Activated CD8-positive, alpha-beta T cell treated with anti-CD3 and anti-CD28 coated beads for 36 hours (primary cell): ENCODE measurements at regions of chr7 and their contacts with region 1.

Region 1: GRCh38 chr7:27196287-27196767 is 3.6 kb downstream of the HOXA13 start:
- DNase-seq: peak; percentile 94
- ATAC-seq: peak; percentile 32
- H3K4me3 Mint-ChIP-seq: no peak overlapping the region
- H3K27ac Mint-ChIP-seq: no peak overlapping the region
- H3K4me1 Mint-ChIP-seq: peaks cover 31% of the 10 kb centered on the region
- H3K27me3 Mint-ChIP-seq: peaks cover 78% of the 10 kb centered on the region
- CTCF ChIP-seq: peak; percentile 84

Region 2: GRCh38 chr7:27160546-27161213 is 35.6 kb before region 1 on chr7:
- CTCF ChIA-PET with region 1: interaction called, 7 read pairs
- POLR2A ChIA-PET with region 1: no interaction called
- intact Hi-C with region 1: loop called (anchors 5 kb)
- DNase-seq: peak; percentile 89
- ATAC-seq: peak; percentile 78
- H3K4me3 Mint-ChIP-seq: peak overlapping the region; percentile 59
- H3K27ac Mint-ChIP-seq: no peak overlapping the region
- H3K4me1 Mint-ChIP-seq: peaks cover 27% of the 10 kb centered on the region
- H3K27me3 Mint-ChIP-seq: peaks cover 79% of the 10 kb centered on the region
- CTCF ChIP-seq: peak; percentile 98

Region 3: DNA sequence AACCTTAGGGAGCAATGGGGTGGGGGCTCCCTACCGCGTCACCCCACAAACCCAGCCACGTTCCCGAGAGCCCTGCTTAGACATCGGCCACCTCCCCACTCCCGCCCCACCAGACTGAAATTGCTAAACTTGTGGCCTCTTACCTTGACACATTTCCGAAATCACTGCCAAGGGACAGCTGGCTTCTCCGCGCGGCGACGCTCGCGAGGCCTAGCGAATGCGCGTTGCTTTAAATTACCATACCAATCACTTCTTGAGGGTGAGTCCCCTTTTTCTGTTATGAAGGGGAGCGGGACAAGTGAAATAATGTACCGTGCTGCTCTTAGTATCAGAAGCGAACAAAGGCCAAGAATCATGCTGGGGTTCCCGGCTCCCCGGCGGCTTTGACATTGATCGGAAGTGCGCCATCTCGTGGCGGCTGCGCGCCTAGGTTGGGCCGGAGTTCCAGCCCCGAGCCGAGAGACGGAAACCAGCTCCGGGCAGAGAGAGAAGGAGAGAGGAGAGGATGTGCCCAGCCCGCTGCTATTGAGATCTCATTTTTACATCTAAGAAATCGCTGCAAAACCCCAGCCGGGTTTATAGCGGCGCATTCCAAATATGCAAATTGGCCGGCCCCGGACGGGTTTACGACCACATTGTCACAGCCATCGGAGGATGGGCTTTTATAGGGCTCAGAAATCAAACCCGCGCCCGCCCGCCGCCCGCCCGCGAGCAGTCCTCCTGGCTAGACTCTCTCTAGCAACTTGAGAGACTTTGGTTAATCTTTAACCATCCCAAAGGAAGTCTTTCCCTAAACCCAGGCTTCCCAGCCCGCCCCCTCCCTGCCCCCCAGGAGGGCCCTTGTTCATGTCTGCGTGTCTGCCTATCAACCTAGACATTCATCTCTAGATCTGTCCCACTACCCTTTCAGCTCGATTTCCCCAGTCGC is 16.6 kb before region 1 on chr7:
- CTCF ChIA-PET with region 1: interaction called, 28 read pairs
- POLR2A ChIA-PET with region 1: interaction called, 5 read pairs
- intact Hi-C with region 1: no loop called
- DNase-seq: peak; percentile 73
- ATAC-seq: peak; percentile 78
- H3K4me3 Mint-ChIP-seq: no peak overlapping the region
- H3K27ac Mint-ChIP-seq: no peak overlapping the region
- H3K4me1 Mint-ChIP-seq: peaks cover 5% of the 10 kb centered on the region
- H3K27me3 Mint-ChIP-seq: peaks cover 68% of the 10 kb centered on the region
- CTCF ChIP-seq: peak; percentile 84

Region 4: GRCh38 chr7:27377988-27378387 is 181.7 kb after region 1 on chr7:
- CTCF ChIA-PET with region 1: no interaction called
- POLR2A ChIA-PET with region 1: no interaction called
- intact Hi-C with region 1: no loop called
- DNase-seq: no peak
- ATAC-seq: no peak
- H3K4me3 Mint-ChIP-seq: no peak overlapping the region
- H3K27ac Mint-ChIP-seq: no peak overlapping the region
- H3K4me1 Mint-ChIP-seq: no peaks in the 10 kb centered on the region
- H3K27me3 Mint-ChIP-seq: peaks cover 15% of the 10 kb centered on the region
- CTCF ChIP-seq: no peak

Region 5: GRCh38 chr7:27576360-27576944 is 380.1 kb after region 1 on chr7:
- CTCF ChIA-PET with region 1: interaction called, 42 read pairs
- POLR2A ChIA-PET with region 1: no interaction called
- intact Hi-C with region 1: loop called (anchors 5 kb)
- DNase-seq: no peak
- ATAC-seq: no peak
- H3K4me3 Mint-ChIP-seq: no peak overlapping the region
- H3K27ac Mint-ChIP-seq: no peak overlapping the region
- H3K4me1 Mint-ChIP-seq: no peaks in the 10 kb centered on the region
- H3K27me3 Mint-ChIP-seq: no peaks in the 10 kb centered on the region
- CTCF ChIP-seq: peak; percentile 61

Region 6: DNA sequence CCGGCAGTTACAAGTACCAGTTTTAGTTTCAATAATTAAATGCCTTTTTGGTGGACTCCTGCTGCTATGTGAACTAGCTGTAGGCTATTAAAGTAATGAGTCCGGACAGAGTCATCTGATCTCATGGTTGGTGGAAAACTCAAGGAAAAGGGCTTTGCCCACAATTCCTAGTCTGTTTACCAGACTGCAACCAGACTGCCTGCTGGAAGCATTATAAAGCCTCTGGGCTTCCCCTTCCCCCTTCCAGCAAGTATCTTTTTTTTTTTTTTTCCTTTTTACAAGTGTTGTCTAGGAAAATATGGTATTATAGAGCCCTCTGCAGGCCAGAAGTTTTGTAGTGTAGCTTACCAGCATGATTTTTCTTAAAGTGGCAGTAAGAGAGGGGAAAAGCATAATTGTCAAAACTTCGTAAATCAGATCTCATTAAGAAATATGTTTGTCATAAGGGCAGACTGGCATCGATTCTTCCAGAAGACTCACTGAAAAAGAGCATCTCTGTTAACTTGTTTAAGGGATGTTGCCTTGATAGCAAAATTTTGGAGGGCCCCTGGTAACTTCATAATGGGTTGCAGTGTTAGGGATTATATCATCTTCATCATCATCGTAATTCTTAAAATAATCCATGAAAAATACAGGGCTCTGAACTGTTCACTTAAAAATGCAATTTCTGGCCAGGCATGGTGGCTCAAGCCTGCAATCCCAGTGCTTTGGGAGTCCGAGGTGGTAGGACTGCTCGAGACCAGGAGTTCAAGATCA is 724.9 kb after region 1 on chr7:
- CTCF ChIA-PET with region 1: interaction called, 16 read pairs
- POLR2A ChIA-PET with region 1: no interaction called
- intact Hi-C with region 1: loop called (anchors 10 kb)
- DNase-seq: peak; percentile 53
- ATAC-seq: peak; percentile 62
- H3K4me3 Mint-ChIP-seq: no peak overlapping the region
- H3K27ac Mint-ChIP-seq: no peak overlapping the region
- H3K4me1 Mint-ChIP-seq: peaks cover 7% of the 10 kb centered on the region
- H3K27me3 Mint-ChIP-seq: no peaks in the 10 kb centered on the region
- CTCF ChIP-seq: peak; percentile 67